B cell (primary cell): ENCODE measurements at regions of chr17 and their contacts with region 1.

Region 1: DNA sequence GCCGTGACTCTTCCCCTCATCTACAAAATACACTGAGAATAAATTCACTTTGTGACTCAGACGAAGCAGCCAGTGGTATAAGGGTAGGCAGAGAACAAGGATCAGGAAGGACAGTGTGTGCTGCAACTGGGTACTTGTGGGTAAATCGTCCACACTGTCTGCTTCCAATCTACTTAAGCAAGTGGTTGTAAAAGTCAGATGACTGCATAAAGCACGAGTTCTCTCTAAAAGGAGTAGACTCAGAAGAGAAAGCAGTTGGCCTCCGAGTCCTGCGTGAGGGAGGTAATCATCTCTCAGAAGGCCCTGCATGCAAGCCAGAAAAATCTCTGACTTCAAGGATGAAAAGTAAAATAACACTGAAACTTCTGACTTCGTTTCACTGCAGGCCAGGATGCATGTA is 43.1 kb downstream of the ANKFY1 start:
- DNase-seq: no peak
- ATAC-seq: no peak
- H3K4me3 ChIP-seq: no peak overlapping the region
- H3K4me3 Mint-ChIP-seq: no peak overlapping the region
- H3K27ac ChIP-seq: no peak overlapping the region
- H3K27ac Mint-ChIP-seq: no peak overlapping the region
- H3K4me1 ChIP-seq: no peaks in the 10 kb centered on the region
- H3K4me1 Mint-ChIP-seq: peaks cover 6% of the 10 kb centered on the region
- H3K27me3 ChIP-seq: no peaks in the 10 kb centered on the region
- H3K27me3 Mint-ChIP-seq: no peaks in the 10 kb centered on the region
- CTCF ChIP-seq: no peak

Region 2: GRCh38 chr17:3802461-3803307 is 418.0 kb before region 1 on chr17:
- CTCF ChIA-PET with region 1: no interaction called
- POLR2A ChIA-PET with region 1: no interaction called
- intact Hi-C with region 1: no loop called
- DNase-seq: no peak
- ATAC-seq: no peak
- H3K4me3 ChIP-seq: no peak overlapping the region
- H3K4me3 Mint-ChIP-seq: peak overlapping the region; percentile 3
- H3K27ac ChIP-seq: no peak overlapping the region
- H3K27ac Mint-ChIP-seq: peak overlapping the region; percentile 64
- H3K4me1 ChIP-seq: peaks cover 14 to 43% of the 10 kb centered on the region in 2 donors
- H3K4me1 Mint-ChIP-seq: peaks cover 53% of the 10 kb centered on the region
- H3K27me3 ChIP-seq: no peaks in the 10 kb centered on the region
- H3K27me3 Mint-ChIP-seq: no peaks in the 10 kb centered on the region
- CTCF ChIP-seq: no peak

Region 3: DNA sequence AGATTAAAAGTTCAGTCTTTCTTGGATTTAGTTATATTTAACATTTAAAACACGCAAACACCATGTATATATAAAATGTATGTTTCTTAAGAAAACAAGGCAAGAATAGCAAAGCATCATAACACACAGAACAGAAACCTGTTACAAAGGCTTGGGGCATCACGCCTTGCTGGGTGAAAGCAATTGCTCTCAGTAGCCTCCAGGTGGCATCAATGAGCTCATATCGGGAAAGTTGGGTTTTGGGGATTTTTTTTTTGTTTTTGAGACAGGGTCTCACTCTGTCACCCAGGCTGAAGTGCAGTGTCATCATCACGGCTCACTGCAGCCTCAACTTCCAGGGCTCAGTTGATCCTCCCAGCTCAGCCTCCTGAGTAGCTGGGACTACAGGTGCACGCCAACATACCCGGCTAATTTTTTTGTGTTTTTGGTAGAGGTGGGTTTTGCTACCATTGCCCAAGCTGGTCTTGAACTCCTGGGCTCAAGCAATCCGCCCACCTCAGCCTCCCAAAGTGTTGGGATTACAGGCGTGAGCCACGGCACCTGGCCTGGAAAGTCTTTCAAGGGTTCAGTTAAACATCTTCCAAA is 20.7 kb before region 1 on chr17:
- CTCF ChIA-PET with region 1: interaction called, 44 read pairs
- POLR2A ChIA-PET with region 1: no interaction called
- intact Hi-C with region 1: loop called (anchors 1 kb)
- DNase-seq: peak; percentile 58
- ATAC-seq: peak; percentile 70
- H3K4me3 ChIP-seq: no peak overlapping the region
- H3K4me3 Mint-ChIP-seq: no peak overlapping the region
- H3K27ac ChIP-seq: no peak overlapping the region
- H3K27ac Mint-ChIP-seq: no peak overlapping the region
- H3K4me1 ChIP-seq: no peaks in the 10 kb centered on the region
- H3K4me1 Mint-ChIP-seq: no peaks in the 10 kb centered on the region
- H3K27me3 ChIP-seq: no peaks in the 10 kb centered on the region
- H3K27me3 Mint-ChIP-seq: no peaks in the 10 kb centered on the region
- CTCF ChIP-seq: peak; percentile 85

Region 4: DNA sequence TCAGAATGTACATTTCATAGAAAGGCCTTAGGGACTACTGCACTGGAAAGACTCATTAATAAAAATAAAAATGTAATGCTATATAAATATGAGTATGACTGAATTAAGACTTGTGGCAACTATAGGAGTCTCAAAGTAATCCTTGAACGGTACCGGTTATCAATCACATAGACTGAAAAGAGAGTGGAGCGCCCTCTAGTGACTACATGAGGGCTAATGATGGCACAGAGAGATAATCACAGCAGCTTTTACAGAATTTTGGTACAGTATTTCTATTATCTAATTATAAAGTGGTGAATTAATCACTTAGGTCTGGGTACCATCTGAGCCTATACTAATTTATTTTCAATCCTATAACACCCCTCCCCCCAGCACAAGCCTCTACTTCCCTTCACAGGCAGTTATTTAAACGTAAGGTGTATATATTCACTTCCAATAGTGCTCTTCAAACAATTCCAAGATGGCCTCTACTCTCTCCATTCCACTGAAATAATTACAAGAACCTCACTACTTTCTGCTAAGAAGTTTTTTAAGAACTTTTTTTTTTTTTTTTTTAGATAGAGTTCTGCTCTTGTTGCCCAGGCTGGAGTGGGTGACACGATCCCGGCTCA is 83.9 kb after region 1 on chr17:
- CTCF ChIA-PET with region 1: interaction called, 6 read pairs
- POLR2A ChIA-PET with region 1: no interaction called
- intact Hi-C with region 1: loop called (anchors 5 kb)
- DNase-seq: peak; percentile 70
- ATAC-seq: peak; percentile 49
- H3K4me3 ChIP-seq: no peak overlapping the region
- H3K4me3 Mint-ChIP-seq: no peak overlapping the region
- H3K27ac ChIP-seq: no peak overlapping the region
- H3K27ac Mint-ChIP-seq: no peak overlapping the region
- H3K4me1 ChIP-seq: peaks cover 9 to 11% of the 10 kb centered on the region in 2 donors
- H3K4me1 Mint-ChIP-seq: peaks cover 23% of the 10 kb centered on the region
- H3K27me3 ChIP-seq: no peaks in the 10 kb centered on the region
- H3K27me3 Mint-ChIP-seq: no peaks in the 10 kb centered on the region
- CTCF ChIP-seq: peak; percentile 89

Region 5: GRCh38 chr17:4412933-4413831 is 192.5 kb after region 1 on chr17:
- CTCF ChIA-PET with region 1: interaction called, 178 read pairs
- POLR2A ChIA-PET with region 1: no interaction called
- intact Hi-C with region 1: loop called (anchors 1 kb)
- DNase-seq: peak; percentile 91
- ATAC-seq: peak; percentile 94
- H3K4me3 ChIP-seq: peak overlapping the region in 3 of 5 experiments; percentile 13 to 34 (median 15)
- H3K4me3 Mint-ChIP-seq: peak overlapping the region; percentile 69
- H3K27ac ChIP-seq: no peak overlapping the region
- H3K27ac Mint-ChIP-seq: peak overlapping the region; percentile 76
- H3K4me1 ChIP-seq: peaks cover 4 to 7% of the 10 kb centered on the region in 2 donors
- H3K4me1 Mint-ChIP-seq: peaks cover 6% of the 10 kb centered on the region
- H3K27me3 ChIP-seq: no peaks in the 10 kb centered on the region
- H3K27me3 Mint-ChIP-seq: no peaks in the 10 kb centered on the region
- CTCF ChIP-seq: peak; percentile 86

Region 6: GRCh38 chr17:4565209-4566141 is 344.8 kb after region 1 on chr17:
- CTCF ChIA-PET with region 1: interaction called, 4 read pairs
- POLR2A ChIA-PET with region 1: no interaction called
- intact Hi-C with region 1: loop called (anchors 10 kb)
- DNase-seq: peak; percentile 71
- ATAC-seq: peak; percentile 74
- H3K4me3 ChIP-seq: no peak overlapping the region
- H3K4me3 Mint-ChIP-seq: peak overlapping the region; percentile 73
- H3K27ac ChIP-seq: no peak overlapping the region
- H3K27ac Mint-ChIP-seq: no peak overlapping the region
- H3K4me1 ChIP-seq: peaks cover 14 to 19% of the 10 kb centered on the region in 2 donors
- H3K4me1 Mint-ChIP-seq: peaks cover 25% of the 10 kb centered on the region
- H3K27me3 ChIP-seq: no peaks in the 10 kb centered on the region
- H3K27me3 Mint-ChIP-seq: no peaks in the 10 kb centered on the region
- CTCF ChIP-seq: peak; percentile 92